ENCODE measurements at regions of chr19 and their contacts with region 1.

Region 1: DNA sequence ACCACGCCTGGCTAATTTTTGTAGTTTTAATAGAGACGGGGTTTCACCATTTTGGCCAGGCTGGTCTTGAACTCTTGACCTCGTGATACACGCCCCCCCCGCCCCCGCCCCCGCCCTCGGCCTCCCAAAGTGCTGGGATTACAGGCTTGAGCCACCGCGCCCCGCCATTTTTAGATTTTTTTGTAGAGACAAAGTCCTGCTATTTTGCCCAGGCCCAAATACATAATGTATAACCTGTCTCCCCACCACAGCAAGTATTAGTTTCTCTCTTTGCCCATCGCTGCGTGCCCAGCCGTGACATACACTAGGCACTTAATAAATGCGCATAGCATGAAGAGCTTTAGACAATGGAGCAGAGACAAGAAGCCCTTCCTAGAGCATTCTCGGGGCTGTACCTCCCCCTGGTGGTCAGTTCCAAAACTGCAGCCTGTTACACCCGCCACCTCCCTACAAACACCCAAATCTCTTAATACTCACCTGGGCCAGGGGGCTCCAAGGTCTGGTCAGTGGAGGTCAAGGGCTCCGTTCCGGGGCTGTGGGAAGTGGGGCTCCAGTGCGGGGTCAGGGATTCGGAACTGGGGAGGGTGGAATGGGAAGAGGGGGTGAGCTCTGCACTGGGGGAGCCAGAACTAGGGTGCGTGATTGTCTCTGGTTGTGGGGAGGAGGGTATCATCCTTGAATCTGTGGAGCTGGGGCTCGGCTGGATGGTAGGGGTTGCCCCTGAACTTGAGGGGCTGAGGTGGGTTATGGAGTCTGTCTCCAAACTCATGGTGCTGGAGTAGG is 22.5 kb downstream of the IQCN start:
- DNase-seq: peak in 4 of 5 donors; percentile 74 to 83 (median 82)
- H3K4me3 ChIP-seq: no peak overlapping the region
- H3K27ac ChIP-seq: no peak overlapping the region
- H3K4me1 ChIP-seq: no peaks in the 10 kb centered on the region
- H3K27me3 ChIP-seq: no peaks in the 10 kb centered on the region
- CTCF ChIP-seq: peak; percentile 95

Region 2: DNA sequence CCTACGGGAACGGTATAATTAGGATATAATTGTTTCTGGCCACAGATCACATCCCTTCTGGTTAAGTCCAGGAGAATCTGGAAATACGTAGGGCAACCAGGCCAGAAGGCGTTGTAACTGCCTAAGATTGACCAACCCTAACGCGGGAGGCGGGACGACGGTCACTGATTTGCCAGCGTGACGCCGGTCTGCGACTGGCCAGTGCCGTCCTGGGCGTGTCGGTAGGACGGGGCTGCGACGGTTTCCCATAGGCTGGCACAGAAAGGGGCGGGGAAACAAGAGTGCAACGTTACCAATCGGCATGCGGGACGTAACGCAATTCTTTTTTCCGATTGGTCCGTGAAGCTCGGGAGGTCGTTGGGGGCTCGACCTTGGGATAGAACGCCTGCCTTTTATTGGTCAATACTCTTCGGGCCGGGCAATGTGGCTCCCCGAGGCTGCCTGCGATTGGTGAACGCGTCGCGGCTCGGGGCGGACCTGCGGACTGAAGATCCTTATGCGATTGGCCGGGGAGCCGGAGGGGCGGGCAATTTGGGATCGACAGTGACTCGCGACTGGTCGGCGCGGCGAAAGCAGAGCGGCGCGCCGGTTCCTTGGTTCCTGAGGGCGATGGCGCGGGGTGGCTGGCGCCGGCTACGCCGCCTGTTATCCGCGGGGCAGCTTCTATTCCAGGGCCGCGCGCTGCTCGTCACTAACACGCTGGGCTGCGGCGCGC is 58.9 kb before region 1 on chr19 and contains the start of gene MPV17L2:
- intact Hi-C with region 1: loop called (anchors 10 kb)
- DNase-seq: peak; percentile 100
- H3K4me3 ChIP-seq: peak within 1 kb of the TSS; percentile 78 to 79 (median 79)
- H3K27ac ChIP-seq: peak within 1 kb of the TSS; percentile 96 to 99
- H3K4me1 ChIP-seq: peaks cover 0 to 11% (median 9%) of the 10 kb centered on the region in 3 donors
- H3K27me3 ChIP-seq: no peaks in the 10 kb centered on the region
- CTCF ChIP-seq: no peak
- total RNA-seq, gene MPV17L2: 11.5 TPM

Region 3: DNA sequence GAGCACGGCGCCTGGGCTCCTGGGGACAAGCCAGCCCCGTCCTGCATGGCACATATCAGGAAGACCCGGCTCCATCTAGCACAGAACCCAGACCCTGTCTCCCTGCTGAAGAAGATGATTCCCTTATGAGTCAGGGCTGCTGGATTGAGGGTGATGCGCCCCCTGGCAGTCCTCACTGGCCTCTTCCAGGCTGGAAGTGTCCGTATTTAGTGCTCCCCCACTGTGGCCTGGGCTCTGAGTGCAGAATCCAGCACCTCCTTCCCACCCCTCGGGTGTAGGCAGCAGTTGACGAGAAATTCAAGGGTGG is 524.5 kb after region 1 on chr19:
- intact Hi-C with region 1: no loop called
- DNase-seq: no peak
- H3K4me3 ChIP-seq: no peak overlapping the region
- H3K27ac ChIP-seq: no peak overlapping the region
- H3K4me1 ChIP-seq: no peaks in the 10 kb centered on the region
- H3K27me3 ChIP-seq: peaks cover 5% of the 10 kb centered on the region
- CTCF ChIP-seq: no peak

Measured in kidney (tissue), 22 donors.